ENCODE measurements at regions of chr3 and their contacts with region 1.

Region 1: DNA sequence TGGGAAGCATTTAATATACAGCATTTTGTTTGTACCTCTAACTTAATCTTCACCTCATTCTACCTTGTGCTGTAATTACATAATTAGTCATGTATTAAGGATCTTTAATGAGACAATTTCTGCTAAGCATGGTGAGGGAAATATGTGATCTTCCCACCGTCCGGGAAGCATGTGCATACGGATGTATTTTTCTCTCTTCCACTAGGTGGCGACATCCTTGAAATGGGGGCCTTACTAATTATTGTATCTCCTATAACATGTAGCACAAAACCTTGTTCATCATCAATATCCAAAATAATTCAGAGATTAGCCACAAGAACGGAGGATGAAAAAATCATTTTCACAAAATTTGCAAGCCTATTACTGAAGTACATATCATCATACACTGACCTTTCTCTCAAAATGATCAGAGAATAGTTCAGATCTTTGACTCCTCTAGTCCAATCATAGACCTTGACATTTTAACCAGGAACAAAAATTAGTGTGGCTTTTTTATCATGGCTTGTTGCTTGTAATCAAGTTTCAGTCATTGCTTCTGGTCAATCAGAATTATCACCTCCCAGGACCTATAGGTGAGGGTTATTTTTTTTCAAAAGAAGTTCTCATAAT is 148.9 kb upstream of the GBE1 start:
- DNase-seq: no peak
- H3K4me3 ChIP-seq: no peak overlapping the region
- H3K27ac ChIP-seq: no peak overlapping the region
- H3K27me3 ChIP-seq: no peaks in the 10 kb centered on the region
- CTCF ChIP-seq: peak; percentile 82

Region 2: GRCh38 chr3:81666493-81667121 is 243.7 kb before region 1 on chr3:
- CTCF ChIA-PET with region 1: interaction called, 31 read pairs
- POLR2A ChIA-PET with region 1: no interaction called
- DNase-seq: no peak
- H3K4me3 ChIP-seq: no peak overlapping the region
- H3K27ac ChIP-seq: no peak overlapping the region
- H3K27me3 ChIP-seq: no peaks in the 10 kb centered on the region
- CTCF ChIP-seq: peak; percentile 90

Region 3: GRCh38 chr3:81898336-81898735 is 12.0 kb before region 1 on chr3:
- CTCF ChIA-PET with region 1: interaction called, 46 read pairs
- POLR2A ChIA-PET with region 1: no interaction called
- DNase-seq: no peak
- H3K4me3 ChIP-seq: no peak overlapping the region
- H3K27ac ChIP-seq: no peak overlapping the region
- H3K27me3 ChIP-seq: no peaks in the 10 kb centered on the region
- CTCF ChIP-seq: no peak

Region 4: GRCh38 chr3:81920816-81921215 is 10.5 kb after region 1 on chr3:
- CTCF ChIA-PET with region 1: interaction called, 64 read pairs
- POLR2A ChIA-PET with region 1: no interaction called
- DNase-seq: no peak
- H3K4me3 ChIP-seq: no peak overlapping the region
- H3K27ac ChIP-seq: no peak overlapping the region
- H3K27me3 ChIP-seq: no peaks in the 10 kb centered on the region
- CTCF ChIP-seq: no peak